ENCODE measurements at regions of chr18 and their contacts with region 1.

Region 1: GRCh38 chr18:63518178-63519012 is 23.8 kb upstream of the SERPINB12 start:
- DNase-seq: peak; percentile 67
- H3K4me3 Mint-ChIP-seq: no peak overlapping the region
- H3K27ac Mint-ChIP-seq: no peak overlapping the region
- H3K4me1 Mint-ChIP-seq: no peaks in the 10 kb centered on the region
- H3K27me3 Mint-ChIP-seq: peaks cover 19% of the 10 kb centered on the region

Region 2: GRCh38 chr18:63505566-63506335 is 12.6 kb before region 1 on chr18:
- CTCF ChIA-PET with region 1: interaction called, 44 read pairs
- DNase-seq: peak; percentile 38
- H3K4me3 Mint-ChIP-seq: no peak overlapping the region
- H3K27ac Mint-ChIP-seq: no peak overlapping the region
- H3K4me1 Mint-ChIP-seq: no peaks in the 10 kb centered on the region
- H3K27me3 Mint-ChIP-seq: peaks cover 18% of the 10 kb centered on the region

Region 3: GRCh38 chr18:63578357-63578958 is 60.1 kb after region 1 on chr18:
- CTCF ChIA-PET with region 1: interaction called, 164 read pairs
- DNase-seq: peak; percentile 28
- H3K4me3 Mint-ChIP-seq: no peak overlapping the region
- H3K27ac Mint-ChIP-seq: no peak overlapping the region
- H3K4me1 Mint-ChIP-seq: no peaks in the 10 kb centered on the region
- H3K27me3 Mint-ChIP-seq: peaks cover 4% of the 10 kb centered on the region

Region 4: DNA sequence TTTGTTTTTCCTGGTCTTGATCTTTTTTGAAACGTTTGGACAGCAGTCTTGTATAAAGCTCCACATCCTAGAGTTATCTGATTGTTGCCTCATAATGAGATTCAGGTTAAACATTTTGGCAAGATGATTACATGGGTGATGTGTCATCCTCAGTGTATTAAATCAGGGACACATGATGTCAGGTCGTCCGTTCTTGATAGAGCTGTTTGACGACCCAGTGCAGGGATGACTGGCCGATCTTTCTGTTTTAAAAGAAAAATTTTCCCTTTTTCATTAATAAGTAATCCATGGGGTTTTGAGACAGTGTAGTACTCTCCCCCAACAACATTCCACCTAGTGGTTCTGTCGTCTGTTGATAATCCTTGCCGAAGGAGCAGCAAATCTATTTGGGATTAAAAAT is 324.6 kb after region 1 on chr18:
- CTCF ChIA-PET with region 1: interaction called, 11 read pairs
- DNase-seq: no peak
- H3K4me3 Mint-ChIP-seq: no peak overlapping the region
- H3K27ac Mint-ChIP-seq: no peak overlapping the region
- H3K4me1 Mint-ChIP-seq: no peaks in the 10 kb centered on the region
- H3K27me3 Mint-ChIP-seq: peaks cover 3% of the 10 kb centered on the region

Region 5: GRCh38 chr18:63936156-63936931 is 417.9 kb after region 1 on chr18:
- CTCF ChIA-PET with region 1: interaction called, 25 read pairs
- DNase-seq: peak; percentile 75
- H3K4me3 Mint-ChIP-seq: peak overlapping the region; percentile 58
- H3K27ac Mint-ChIP-seq: no peak overlapping the region
- H3K4me1 Mint-ChIP-seq: peaks cover 3% of the 10 kb centered on the region
- H3K27me3 Mint-ChIP-seq: peaks cover 8% of the 10 kb centered on the region

Region 6: DNA sequence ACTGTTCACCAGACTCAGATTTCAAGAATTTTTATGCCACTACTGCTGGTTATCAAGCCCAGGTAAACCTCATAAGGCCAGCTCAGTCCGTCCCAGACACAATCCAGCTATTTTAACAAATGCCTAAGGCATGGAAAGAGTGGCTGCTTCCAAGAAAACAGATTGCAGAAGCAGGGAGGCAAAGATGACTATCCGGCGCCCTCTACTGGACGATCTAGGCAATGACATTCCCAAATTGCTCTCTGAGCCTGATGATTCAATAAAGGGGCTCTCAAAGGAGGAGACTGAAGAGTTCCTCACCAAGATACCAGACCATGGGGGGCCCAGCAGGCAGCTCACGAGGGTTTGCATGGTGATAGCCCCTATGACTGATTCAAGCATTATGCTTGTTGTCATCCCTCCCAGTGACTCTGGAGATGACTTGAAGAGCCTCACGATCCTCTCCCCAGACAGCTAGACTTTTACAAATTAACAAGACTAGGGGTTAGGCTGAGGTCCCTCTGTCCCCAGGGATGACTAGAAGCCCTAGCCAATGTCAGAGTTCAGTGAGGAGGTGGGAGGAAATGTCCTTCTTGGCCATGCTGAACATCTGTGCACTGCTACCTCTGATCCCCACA is 476.5 kb after region 1 on chr18:
- CTCF ChIA-PET with region 1: interaction called, 20 read pairs
- DNase-seq: peak; percentile 61
- H3K4me3 Mint-ChIP-seq: no peak overlapping the region
- H3K27ac Mint-ChIP-seq: no peak overlapping the region
- H3K4me1 Mint-ChIP-seq: peaks cover 7% of the 10 kb centered on the region
- H3K27me3 Mint-ChIP-seq: no peaks in the 10 kb centered on the region

Measured in activated naive CD4-positive, alpha-beta T cell treated with anti-CD3 and anti-CD28 coated beads, Interleukin-2, amount 10 ng/mL, durations not matched to agents 7 days and 5 days (primary cell).